Activated CD8-positive, alpha-beta T cell treated with anti-CD3 and anti-CD28 coated beads for 36 hours (primary cell): ENCODE measurements at regions of chr2 and their contacts with region 1.

Region 1: GRCh38 chr2:168160897-168161296 is 86.5 kb downstream of the STK39 start:
- DNase-seq: peak; percentile 26
- ATAC-seq: peak; percentile 70
- H3K4me3 Mint-ChIP-seq: no peak overlapping the region
- H3K27ac Mint-ChIP-seq: no peak overlapping the region
- H3K4me1 Mint-ChIP-seq: peaks cover 34% of the 10 kb centered on the region
- H3K27me3 Mint-ChIP-seq: no peaks in the 10 kb centered on the region
- CTCF ChIP-seq: peak; percentile 44

Region 2: DNA sequence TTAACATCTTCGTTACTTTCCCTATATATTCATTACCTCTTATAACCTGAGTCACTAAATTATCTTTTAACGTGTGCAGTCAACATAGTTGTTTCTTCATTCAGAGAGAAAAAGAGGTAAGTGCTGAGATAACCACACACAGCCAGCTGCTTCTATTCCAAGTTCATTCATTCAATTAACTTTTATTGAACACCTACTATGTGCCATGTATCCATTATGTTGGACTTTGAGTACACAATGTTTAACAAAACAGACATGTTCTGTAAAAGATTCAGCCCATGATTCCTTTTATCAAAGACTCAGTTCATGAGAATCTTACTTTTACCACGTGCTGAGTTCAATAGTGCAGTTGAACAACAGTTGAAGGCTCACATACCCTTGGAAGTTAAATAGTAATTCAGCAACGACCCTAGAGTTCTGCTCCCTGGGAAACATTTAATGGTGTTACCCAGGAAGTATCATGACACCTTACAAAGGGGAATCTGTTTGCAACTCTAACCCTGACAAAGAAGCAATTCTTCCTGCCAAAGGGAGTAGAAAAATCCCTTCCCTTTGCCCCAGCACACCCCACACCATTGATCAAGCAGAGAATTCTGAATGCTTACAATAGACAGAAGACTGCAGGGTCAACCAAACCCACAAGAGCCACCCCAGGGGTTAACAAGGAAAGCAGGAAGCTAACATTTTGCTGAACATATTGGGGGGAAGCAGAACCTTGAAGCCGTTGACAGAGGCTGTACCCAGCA is 509.3 kb before region 1 on chr2:
- CTCF ChIA-PET with region 1: no interaction called
- POLR2A ChIA-PET with region 1: no interaction called
- intact Hi-C with region 1: no loop called
- DNase-seq: no peak
- ATAC-seq: no peak
- H3K4me3 Mint-ChIP-seq: no peak overlapping the region
- H3K27ac Mint-ChIP-seq: no peak overlapping the region
- H3K4me1 Mint-ChIP-seq: no peaks in the 10 kb centered on the region
- H3K27me3 Mint-ChIP-seq: peaks cover 3% of the 10 kb centered on the region
- CTCF ChIP-seq: no peak

Region 3: GRCh38 chr2:168336864-168337263 is 176.0 kb after region 1 on chr2:
- CTCF ChIA-PET with region 1: interaction called, 11 read pairs
- POLR2A ChIA-PET with region 1: no interaction called
- intact Hi-C with region 1: no loop called
- DNase-seq: peak; percentile 62
- ATAC-seq: peak; percentile 96
- H3K4me3 Mint-ChIP-seq: no peak overlapping the region
- H3K27ac Mint-ChIP-seq: no peak overlapping the region
- H3K4me1 Mint-ChIP-seq: no peaks in the 10 kb centered on the region
- H3K27me3 Mint-ChIP-seq: no peaks in the 10 kb centered on the region
- CTCF ChIP-seq: peak; percentile 29